GM13977 (cell line): ENCODE measurements at regions of chr5 and their contacts with region 1.

Region 1: GRCh38 chr5:112419986-112420864 is 1.1 kb upstream of the EPB41L4A start:
- DNase-seq: peak; percentile 81
- CTCF ChIP-seq: peak; percentile 85

Region 2: GRCh38 chr5:112049738-112050137 is 370.5 kb before region 1 on chr5:
- in situ Hi-C with region 1: no loop called
- DNase-seq: no peak
- CTCF ChIP-seq: no peak

Region 3: GRCh38 chr5:112174959-112175594 is 245.1 kb before region 1 on chr5:
- in situ Hi-C with region 1: loop called (anchors 25 kb)
- DNase-seq: peak; percentile 43
- CTCF ChIP-seq: peak; percentile 58

Region 4: GRCh38 chr5:112511920-112512319 is 91.7 kb after region 1 on chr5:
- in situ Hi-C with region 1: no loop called
- DNase-seq: no peak
- CTCF ChIP-seq: no peak